ENCODE measurements at regions of chrX and their contacts with region 1.

Region 1: DNA sequence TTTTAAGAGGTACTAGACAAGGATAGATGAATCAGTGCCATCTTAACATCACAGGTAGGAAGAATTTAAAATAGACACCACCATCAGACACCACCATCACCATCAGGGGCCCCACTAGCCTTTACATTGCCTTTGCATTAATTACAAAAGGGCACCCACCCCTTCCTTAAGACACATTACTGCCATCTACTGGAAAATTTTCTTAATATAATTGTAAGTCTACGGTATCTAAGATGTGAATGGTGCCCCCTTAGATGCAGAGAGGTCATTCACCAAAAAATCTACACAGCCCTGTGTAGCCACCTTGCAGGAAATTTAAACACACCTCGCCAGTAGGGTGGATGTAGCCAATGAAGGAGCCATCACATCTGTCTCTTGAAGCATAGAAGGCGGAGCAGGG is 184.1 kb downstream of the MID1IP1 start:
- DNase-seq: peak; percentile 7
- H3K4me3 Mint-ChIP-seq: no peak overlapping the region
- H3K27ac Mint-ChIP-seq: no peak overlapping the region
- H3K4me1 Mint-ChIP-seq: peaks cover 2% of the 10 kb centered on the region
- H3K27me3 Mint-ChIP-seq: no peaks in the 10 kb centered on the region

Region 2: DNA sequence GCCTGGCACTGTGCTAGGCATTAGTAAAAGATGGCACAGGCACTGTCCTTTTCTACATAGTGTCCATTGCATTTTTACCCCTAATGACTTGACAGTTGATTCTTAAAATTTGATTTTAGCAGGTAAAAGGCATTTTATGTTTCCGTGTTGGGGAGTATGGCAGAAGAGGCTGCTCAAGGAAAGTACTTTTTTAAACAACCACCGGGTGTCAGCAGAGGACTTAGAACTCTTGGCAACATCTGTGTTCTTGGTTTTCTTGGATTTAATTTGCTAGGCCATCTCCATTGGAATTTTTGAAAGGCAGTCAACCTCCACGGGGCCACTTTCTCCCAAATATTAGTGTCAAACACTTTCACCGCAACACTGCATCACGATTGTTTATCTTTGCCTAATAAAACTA is 321.1 kb before region 1 on chrX:
- CTCF ChIA-PET with region 1: interaction called, 4 read pairs
- intact Hi-C with region 1: loop called (anchors 10 kb)
- DNase-seq: peak; percentile 18
- H3K4me3 Mint-ChIP-seq: no peak overlapping the region
- H3K27ac Mint-ChIP-seq: no peak overlapping the region
- H3K4me1 Mint-ChIP-seq: no peaks in the 10 kb centered on the region
- H3K27me3 Mint-ChIP-seq: no peaks in the 10 kb centered on the region

Region 3: GRCh38 chrX:38717871-38718270 is 267.5 kb before region 1 on chrX:
- CTCF ChIA-PET with region 1: no interaction called
- intact Hi-C with region 1: loop called (anchors 1 kb)
- DNase-seq: peak; percentile 10
- H3K4me3 Mint-ChIP-seq: no peak overlapping the region
- H3K27ac Mint-ChIP-seq: no peak overlapping the region
- H3K4me1 Mint-ChIP-seq: peaks cover 3% of the 10 kb centered on the region
- H3K27me3 Mint-ChIP-seq: no peaks in the 10 kb centered on the region

Region 4: GRCh38 chrX:38754102-38754790 is 231.1 kb before region 1 on chrX:
- CTCF ChIA-PET with region 1: interaction called, 16 read pairs
- intact Hi-C with region 1: loop called (anchors 1 kb)
- DNase-seq: peak; percentile 49
- H3K4me3 Mint-ChIP-seq: no peak overlapping the region
- H3K27ac Mint-ChIP-seq: no peak overlapping the region
- H3K4me1 Mint-ChIP-seq: no peaks in the 10 kb centered on the region
- H3K27me3 Mint-ChIP-seq: no peaks in the 10 kb centered on the region

Region 5: GRCh38 chrX:38768079-38768478 is 217.3 kb before region 1 on chrX:
- CTCF ChIA-PET with region 1: interaction called, 5 read pairs
- intact Hi-C with region 1: loop called (anchors 1 kb)
- DNase-seq: no peak
- H3K4me3 Mint-ChIP-seq: no peak overlapping the region
- H3K27ac Mint-ChIP-seq: no peak overlapping the region
- H3K4me1 Mint-ChIP-seq: no peaks in the 10 kb centered on the region
- H3K27me3 Mint-ChIP-seq: no peaks in the 10 kb centered on the region

Region 6: GRCh38 chrX:38859602-38860001 is 125.8 kb before region 1 on chrX:
- CTCF ChIA-PET with region 1: no interaction called
- intact Hi-C with region 1: no loop called
- DNase-seq: no peak
- H3K4me3 Mint-ChIP-seq: no peak overlapping the region
- H3K27ac Mint-ChIP-seq: no peak overlapping the region
- H3K4me1 Mint-ChIP-seq: no peaks in the 10 kb centered on the region
- H3K27me3 Mint-ChIP-seq: no peaks in the 10 kb centered on the region